ENCODE measurements at regions of chr17 and their contacts with region 1.

Region 1: DNA sequence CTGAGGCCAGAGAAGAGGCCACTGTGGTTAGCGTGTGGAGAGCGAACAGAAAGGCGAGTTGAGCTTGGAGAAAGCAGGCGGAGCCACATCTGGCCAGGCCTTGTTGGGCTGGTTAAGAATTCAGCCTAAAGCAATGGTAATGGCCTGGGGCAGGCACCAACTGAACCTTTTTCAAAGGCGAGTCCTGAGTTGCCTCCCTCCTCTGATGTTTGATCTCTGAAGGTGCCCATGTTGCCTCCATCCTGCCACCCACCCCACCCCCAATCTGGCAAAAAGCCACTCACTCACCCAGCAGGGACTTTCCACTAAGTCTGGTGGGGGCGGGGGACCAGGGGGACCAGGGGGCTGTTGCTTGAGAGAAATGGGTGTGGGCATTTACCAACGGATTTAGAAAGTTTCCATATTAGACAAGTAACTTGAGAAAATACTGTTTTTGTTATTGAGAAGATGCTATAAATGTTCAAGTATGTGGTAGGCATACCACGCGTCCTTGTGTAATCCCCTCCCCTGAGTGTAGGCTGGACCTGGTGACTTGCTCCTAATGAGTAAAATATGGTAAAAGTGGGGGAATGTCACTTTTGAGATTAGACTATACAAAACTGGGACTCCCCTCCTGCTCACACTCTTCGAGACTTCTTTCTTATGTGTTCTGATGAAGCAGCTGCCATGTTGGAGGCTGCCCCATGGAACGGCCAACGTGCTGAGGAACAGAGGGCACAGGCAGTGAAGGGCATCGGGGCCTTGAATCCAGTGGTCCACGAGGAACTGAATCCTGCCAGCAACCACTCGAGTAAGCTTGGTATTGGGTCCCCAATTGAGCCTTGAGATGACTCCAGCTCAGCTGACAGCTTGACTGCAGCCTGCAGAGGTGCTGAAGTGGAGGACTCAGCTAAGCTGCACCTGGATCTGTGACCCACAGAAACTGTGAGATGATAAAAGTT is 29.9 kb upstream of the TNS4 start:
- DNase-seq: peak; percentile 48
- H3K4me3 Mint-ChIP-seq: peak overlapping the region; percentile 79
- H3K27ac Mint-ChIP-seq: peak overlapping the region; percentile 92
- H3K4me1 Mint-ChIP-seq: peaks cover 69% of the 10 kb centered on the region
- H3K27me3 Mint-ChIP-seq: no peaks in the 10 kb centered on the region

Region 2: GRCh38 chr17:40399185-40399584 is 132.1 kb before region 1 on chr17:
- intact Hi-C with region 1: loop called (anchors 1 kb)
- DNase-seq: no peak
- H3K4me3 Mint-ChIP-seq: no peak overlapping the region
- H3K27ac Mint-ChIP-seq: peak overlapping the region; percentile 60
- H3K4me1 Mint-ChIP-seq: peaks cover 26% of the 10 kb centered on the region
- H3K27me3 Mint-ChIP-seq: no peaks in the 10 kb centered on the region

Region 3: GRCh38 chr17:40443583-40444327 is 87.6 kb before region 1 on chr17:
- intact Hi-C with region 1: loop called (anchors 1 kb)
- DNase-seq: peak; percentile 66
- H3K4me3 Mint-ChIP-seq: peak overlapping the region; percentile 84
- H3K27ac Mint-ChIP-seq: peak overlapping the region; percentile 89
- H3K4me1 Mint-ChIP-seq: peaks cover 39% of the 10 kb centered on the region
- H3K27me3 Mint-ChIP-seq: no peaks in the 10 kb centered on the region

Region 4: GRCh38 chr17:40499551-40500174 is 31.7 kb before region 1 on chr17:
- intact Hi-C with region 1: no loop called
- DNase-seq: no peak
- H3K4me3 Mint-ChIP-seq: no peak overlapping the region
- H3K27ac Mint-ChIP-seq: no peak overlapping the region
- H3K4me1 Mint-ChIP-seq: peaks cover 6% of the 10 kb centered on the region
- H3K27me3 Mint-ChIP-seq: no peaks in the 10 kb centered on the region

Region 5: GRCh38 chr17:40516581-40517285 is 14.6 kb before region 1 on chr17:
- intact Hi-C with region 1: loop called (anchors 1 kb)
- DNase-seq: peak; percentile 77
- H3K4me3 Mint-ChIP-seq: peak overlapping the region; percentile 74
- H3K27ac Mint-ChIP-seq: peak overlapping the region; percentile 88
- H3K4me1 Mint-ChIP-seq: peaks cover 61% of the 10 kb centered on the region
- H3K27me3 Mint-ChIP-seq: no peaks in the 10 kb centered on the region

Region 6: DNA sequence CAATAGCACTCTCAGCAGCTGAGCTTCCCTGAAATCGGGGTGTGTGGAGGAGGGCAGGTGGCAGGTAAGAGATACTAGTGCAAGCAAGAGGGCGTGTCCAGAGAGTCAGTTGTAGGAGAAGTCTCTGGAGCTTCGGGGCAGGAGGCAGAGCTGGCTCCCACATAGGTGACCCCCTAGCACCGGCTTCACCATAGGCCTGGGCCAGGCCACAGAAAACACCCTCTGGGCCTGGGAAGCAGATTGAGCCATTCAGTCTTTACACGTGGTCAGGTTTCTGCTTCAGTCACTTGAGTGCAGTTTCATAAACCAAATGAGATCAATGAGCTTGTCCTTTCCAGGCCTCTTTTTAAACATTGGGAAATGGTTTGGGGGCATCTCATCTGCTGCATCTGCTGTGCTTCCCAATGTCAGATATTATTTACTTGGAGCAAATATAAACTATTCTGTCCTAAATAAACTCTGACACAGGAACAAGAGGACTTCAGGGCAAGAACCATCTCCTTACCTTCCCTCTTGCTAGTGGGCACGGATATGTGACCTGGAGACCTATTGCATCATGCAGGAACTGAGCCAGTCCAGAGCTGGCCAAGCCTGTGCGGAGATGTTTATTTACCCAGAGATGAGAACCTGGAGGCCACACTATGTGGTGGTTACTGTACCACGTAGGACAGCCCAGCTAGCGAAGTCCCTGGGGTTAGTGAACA is 17.8 kb after region 1 on chr17:
- intact Hi-C with region 1: no loop called
- DNase-seq: peak; percentile 8
- H3K4me3 Mint-ChIP-seq: no peak overlapping the region
- H3K27ac Mint-ChIP-seq: peak overlapping the region; percentile 72
- H3K4me1 Mint-ChIP-seq: peaks cover 61% of the 10 kb centered on the region
- H3K27me3 Mint-ChIP-seq: no peaks in the 10 kb centered on the region

Region 7: GRCh38 chr17:40559954-40560591 is 28.8 kb after region 1 on chr17:
- intact Hi-C with region 1: loop called (anchors 2 kb)
- DNase-seq: peak; percentile 77
- H3K4me3 Mint-ChIP-seq: peak overlapping the region; percentile 95
- H3K27ac Mint-ChIP-seq: peak overlapping the region; percentile 99
- H3K4me1 Mint-ChIP-seq: peaks cover 61% of the 10 kb centered on the region
- H3K27me3 Mint-ChIP-seq: no peaks in the 10 kb centered on the region

Region 8: GRCh38 chr17:40577611-40578065 is 46.3 kb after region 1 on chr17:
- intact Hi-C with region 1: no loop called
- DNase-seq: no peak
- H3K4me3 Mint-ChIP-seq: no peak overlapping the region
- H3K27ac Mint-ChIP-seq: peak overlapping the region; percentile 65
- H3K4me1 Mint-ChIP-seq: peaks cover 54% of the 10 kb centered on the region
- H3K27me3 Mint-ChIP-seq: no peaks in the 10 kb centered on the region

Region 9: GRCh38 chr17:40699371-40699770 is 168.1 kb after region 1 on chr17:
- intact Hi-C with region 1: no loop called
- DNase-seq: no peak
- H3K4me3 Mint-ChIP-seq: no peak overlapping the region
- H3K27ac Mint-ChIP-seq: no peak overlapping the region
- H3K4me1 Mint-ChIP-seq: no peaks in the 10 kb centered on the region
- H3K27me3 Mint-ChIP-seq: peaks cover 52% of the 10 kb centered on the region

Measured in activated T-helper 2 cell treated with anti-CD3 and anti-CD28 coated beads, Interferon-gamma antibody, Interleukin-2, Interleukin-4, amounts not matched to agents 10 μg/mL and 5 μg/mL and 100 μg/mL, durations not matched to agents 14 hours and 24 hours and 36 hours (primary cell).